ENCODE measurements at regions of chr7 and their contacts with region 1.

Region 1: DNA sequence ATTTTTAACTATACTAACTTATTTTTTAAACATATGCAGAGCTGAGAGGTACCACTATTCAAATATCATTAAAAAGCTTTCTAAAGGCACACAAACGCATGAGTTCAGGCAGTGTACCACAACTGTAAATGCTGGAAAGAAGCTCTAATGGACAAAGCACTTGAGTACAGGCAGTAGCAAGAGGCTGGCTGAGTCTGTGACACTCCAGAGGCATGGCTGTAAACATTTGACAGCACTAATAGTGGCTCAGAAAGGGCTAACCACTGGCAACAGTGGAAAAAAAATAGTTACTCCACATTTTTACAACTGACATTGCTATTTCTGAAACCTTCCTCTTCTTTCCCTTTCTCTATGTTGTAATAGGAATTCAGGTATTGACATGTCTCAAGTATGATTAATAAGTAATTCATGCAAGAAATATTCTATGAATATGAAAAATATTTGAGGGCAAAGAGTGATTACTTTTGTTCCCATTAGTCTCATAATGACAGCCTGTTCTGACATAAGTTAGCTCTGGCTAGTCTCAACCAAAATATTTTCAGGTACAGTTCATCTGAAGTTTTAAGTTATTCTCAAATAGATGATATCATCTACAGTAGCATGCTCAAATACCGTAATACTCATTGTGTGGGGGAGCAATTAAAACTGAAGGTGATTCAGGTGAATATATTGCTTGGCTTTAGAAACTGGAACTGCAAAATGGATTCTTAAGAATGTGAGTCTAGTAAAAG is 324.0 kb upstream of the POT1 start:
- DNase-seq: peak; percentile 93
- H3K4me3 ChIP-seq: peak overlapping the region in 1 of 3 experiments; percentile 22
- H3K27ac ChIP-seq: peak overlapping the region; percentile 76
- H3K4me1 ChIP-seq: peaks cover 15% of the 10 kb centered on the region
- H3K27me3 ChIP-seq: no peaks in the 10 kb centered on the region
- CTCF ChIP-seq: no peak

Region 2: DNA sequence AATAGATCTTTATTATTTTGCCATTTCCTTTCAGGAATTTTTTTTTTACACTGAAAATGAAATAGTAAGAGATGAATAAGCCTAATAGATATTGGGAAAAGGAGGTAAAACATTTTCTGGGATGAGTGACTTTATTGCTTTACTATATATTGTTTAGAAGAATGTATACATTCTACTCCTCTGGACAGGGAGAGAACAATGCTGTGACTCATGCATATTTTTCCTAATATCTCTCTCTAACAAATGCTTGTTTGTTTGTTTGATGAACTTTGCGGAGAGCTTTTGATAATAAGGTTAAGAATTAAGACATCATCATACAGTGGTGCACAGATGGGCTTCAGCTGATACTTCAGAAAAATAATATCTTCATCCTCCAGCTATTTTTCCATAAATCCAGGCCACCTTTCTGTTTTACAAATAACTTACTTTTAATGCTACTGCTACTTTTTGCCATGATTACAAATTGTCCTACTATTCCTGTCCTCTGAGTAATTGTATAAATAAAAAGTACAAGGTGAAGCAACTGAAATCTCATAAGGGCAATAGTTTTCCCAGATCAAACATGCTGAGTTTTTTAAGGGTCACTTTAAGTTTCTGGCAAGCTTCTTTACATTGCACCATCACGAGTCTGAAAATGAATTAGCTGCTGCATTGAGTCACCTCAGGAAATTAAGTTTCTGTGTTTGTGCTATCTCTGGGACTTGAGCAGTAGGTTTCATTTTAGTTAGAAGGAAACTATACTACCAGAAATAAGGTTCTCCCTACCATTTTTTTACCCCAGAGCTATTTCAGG is 116.7 kb before region 1 on chr7:
- CTCF ChIA-PET with region 1: no interaction called
- dilution Hi-C with region 1: no loop called
- in situ Hi-C with region 1: no loop called
- intact Hi-C with region 1: loop called (anchors 5 kb)
- DNase-seq: peak; percentile 96
- H3K4me3 ChIP-seq: peak overlapping the region in 2 of 3 experiments; percentile 27 to 31
- H3K27ac ChIP-seq: peak overlapping the region; percentile 96
- H3K4me1 ChIP-seq: peaks cover 23% of the 10 kb centered on the region
- H3K27me3 ChIP-seq: no peaks in the 10 kb centered on the region
- CTCF ChIP-seq: no peak